Calu3 (cell line): ENCODE measurements at regions of chr17 and their contacts with region 1.

Region 1: GRCh38 chr17:54900457-54901229 is at the start of gene TOM1L1:
- DNase-seq: peak; percentile 84
- H3K4me3 Mint-ChIP-seq: no peak within 1 kb of the TSS
- H3K27ac Mint-ChIP-seq: peak within 1 kb of the TSS; percentile 82
- H3K4me1 Mint-ChIP-seq: no peaks in the 10 kb centered on the region
- H3K27me3 Mint-ChIP-seq: no peaks in the 10 kb centered on the region
- CTCF ChIP-seq: no peak
- total RNA-seq, gene TOM1L1: 37.2 and 46.8 TPM in 2 replicates

Region 2: GRCh38 chr17:54849660-54850059 is 51.0 kb before region 1 on chr17:
- CTCF ChIA-PET with region 1: no interaction called
- intact Hi-C with region 1: no loop called
- DNase-seq: no peak
- H3K4me3 Mint-ChIP-seq: no peak overlapping the region
- H3K27ac Mint-ChIP-seq: no peak overlapping the region
- H3K4me1 Mint-ChIP-seq: no peaks in the 10 kb centered on the region
- H3K27me3 Mint-ChIP-seq: no peaks in the 10 kb centered on the region
- CTCF ChIP-seq: no peak

Region 3: DNA sequence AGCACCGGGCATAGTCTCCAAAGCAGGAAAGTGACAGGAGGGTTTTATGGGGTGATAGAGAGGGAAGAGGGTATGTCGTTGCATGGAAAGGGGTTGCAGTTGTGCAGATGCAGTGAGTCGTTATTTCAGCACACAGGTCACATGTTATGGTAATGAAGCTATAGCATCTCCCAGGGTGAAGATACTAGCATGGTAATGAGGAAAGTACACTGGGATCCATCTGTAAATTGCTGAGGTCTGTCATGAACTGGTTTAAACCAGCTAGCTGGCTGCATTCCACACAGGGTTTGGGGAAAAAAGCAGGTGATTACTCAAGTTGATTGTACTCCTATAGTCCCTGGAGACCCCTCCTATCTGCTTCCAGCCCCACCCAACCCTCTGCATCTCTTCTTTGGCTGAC is 56.1 kb after region 1 on chr17:
- CTCF ChIA-PET with region 1: no interaction called
- intact Hi-C with region 1: loop called (anchors 1 kb)
- DNase-seq: no peak
- H3K4me3 Mint-ChIP-seq: no peak overlapping the region
- H3K27ac Mint-ChIP-seq: no peak overlapping the region
- H3K4me1 Mint-ChIP-seq: no peaks in the 10 kb centered on the region
- H3K27me3 Mint-ChIP-seq: no peaks in the 10 kb centered on the region
- CTCF ChIP-seq: no peak

Region 4: DNA sequence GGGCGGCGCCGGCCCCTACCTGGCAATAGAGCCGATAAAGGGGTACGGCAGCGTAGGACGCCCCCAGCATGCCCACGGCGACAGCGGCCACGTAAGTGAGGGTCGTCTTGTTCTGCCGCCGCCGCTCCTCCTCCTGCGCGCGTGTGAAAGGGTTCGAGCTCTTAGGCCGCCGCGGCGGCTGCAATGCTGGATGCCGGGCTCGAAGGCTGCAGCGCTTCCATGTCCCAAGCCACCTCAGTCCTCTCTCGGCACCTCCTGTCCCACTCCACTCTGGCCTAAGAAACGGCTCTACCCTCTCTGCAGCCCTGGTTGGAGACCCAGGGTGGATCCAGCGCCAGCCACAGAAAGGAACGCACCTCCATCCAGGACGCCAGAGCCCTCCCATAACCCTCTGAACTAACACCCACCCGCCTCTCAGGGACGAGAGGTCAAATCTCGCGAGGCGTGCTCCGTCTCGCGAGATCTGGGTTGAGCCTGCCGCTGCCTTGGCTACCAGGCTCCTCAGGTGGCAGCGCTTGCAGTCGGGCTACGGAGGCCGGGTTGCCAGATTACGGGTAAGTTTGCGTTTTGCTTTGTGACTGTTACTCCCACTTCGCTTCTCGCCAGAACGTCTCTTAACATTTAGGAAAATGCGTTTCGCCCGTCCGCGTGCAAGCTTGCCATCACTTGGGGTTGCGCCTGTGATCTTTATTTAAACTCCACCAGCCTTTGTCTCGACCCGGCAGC is 67.8 kb after region 1 on chr17 and contains the starts of genes COX11 and STXBP4:
- CTCF ChIA-PET with region 1: interaction called, 3 read pairs
- intact Hi-C with region 1: loop called (anchors 2 kb)
- DNase-seq: peak; percentile 87
- H3K4me3 Mint-ChIP-seq: no peak within 1 kb of the TSS
- H3K27ac Mint-ChIP-seq: no peak within 1 kb of the TSS
- H3K4me1 Mint-ChIP-seq: no peaks in the 10 kb centered on the region
- H3K27me3 Mint-ChIP-seq: no peaks in the 10 kb centered on the region
- CTCF ChIP-seq: no peak
- total RNA-seq, gene COX11: 48.4 and 48.8 TPM in 2 replicates
- total RNA-seq, gene STXBP4: 9.2 and 11.3 TPM in 2 replicates

Region 5: GRCh38 chr17:55285340-55286301 is 385.0 kb after region 1 on chr17:
- CTCF ChIA-PET with region 1: no interaction called
- intact Hi-C with region 1: loop called (anchors 10 kb)
- DNase-seq: no peak
- H3K4me3 Mint-ChIP-seq: no peak overlapping the region
- H3K27ac Mint-ChIP-seq: peak overlapping the region; percentile 71
- H3K4me1 Mint-ChIP-seq: peaks cover 46% of the 10 kb centered on the region
- H3K27me3 Mint-ChIP-seq: no peaks in the 10 kb centered on the region
- CTCF ChIP-seq: no peak